Activated CD4-positive, alpha-beta T cell treated with anti-CD3 and anti-CD28 coated beads for 36 hours (primary cell): ENCODE measurements at regions of chr5 and their contacts with region 1.

Region 1: GRCh38 chr5:140690941-140691924 is at the starts of genes HARS1 and HARS2:
- DNase-seq: peak; percentile 91
- ATAC-seq: peak; percentile 95
- H3K4me3 Mint-ChIP-seq: peak within 1 kb of the TSS; percentile 97
- H3K27ac Mint-ChIP-seq: peak within 1 kb of the TSS; percentile 98
- H3K4me1 Mint-ChIP-seq: peaks cover 41% of the 10 kb centered on the region
- H3K27me3 Mint-ChIP-seq: no peaks in the 10 kb centered on the region
- total RNA-seq, gene HARS1: 83.3 to 91.0 TPM
- total RNA-seq, gene HARS2: 20.9 to 28.1 TPM

Region 2: GRCh38 chr5:140113699-140114263 is 577.5 kb before region 1 on chr5 and contains the start of gene PURA:
- CTCF ChIA-PET with region 1: no interaction called
- POLR2A ChIA-PET with region 1: no interaction called
- intact Hi-C with region 1: loop called in 1 of 2 experiments (anchors 10 kb)
- DNase-seq: peak; percentile 98
- ATAC-seq: peak; percentile 92
- H3K4me3 Mint-ChIP-seq: peak within 1 kb of the TSS; percentile 89
- H3K27ac Mint-ChIP-seq: peak within 1 kb of the TSS; percentile 84
- H3K4me1 Mint-ChIP-seq: peaks cover 65% of the 10 kb centered on the region
- H3K27me3 Mint-ChIP-seq: peaks cover 3% of the 10 kb centered on the region
- total RNA-seq, gene PURA: 9.5 to 10.7 TPM

Region 3: DNA sequence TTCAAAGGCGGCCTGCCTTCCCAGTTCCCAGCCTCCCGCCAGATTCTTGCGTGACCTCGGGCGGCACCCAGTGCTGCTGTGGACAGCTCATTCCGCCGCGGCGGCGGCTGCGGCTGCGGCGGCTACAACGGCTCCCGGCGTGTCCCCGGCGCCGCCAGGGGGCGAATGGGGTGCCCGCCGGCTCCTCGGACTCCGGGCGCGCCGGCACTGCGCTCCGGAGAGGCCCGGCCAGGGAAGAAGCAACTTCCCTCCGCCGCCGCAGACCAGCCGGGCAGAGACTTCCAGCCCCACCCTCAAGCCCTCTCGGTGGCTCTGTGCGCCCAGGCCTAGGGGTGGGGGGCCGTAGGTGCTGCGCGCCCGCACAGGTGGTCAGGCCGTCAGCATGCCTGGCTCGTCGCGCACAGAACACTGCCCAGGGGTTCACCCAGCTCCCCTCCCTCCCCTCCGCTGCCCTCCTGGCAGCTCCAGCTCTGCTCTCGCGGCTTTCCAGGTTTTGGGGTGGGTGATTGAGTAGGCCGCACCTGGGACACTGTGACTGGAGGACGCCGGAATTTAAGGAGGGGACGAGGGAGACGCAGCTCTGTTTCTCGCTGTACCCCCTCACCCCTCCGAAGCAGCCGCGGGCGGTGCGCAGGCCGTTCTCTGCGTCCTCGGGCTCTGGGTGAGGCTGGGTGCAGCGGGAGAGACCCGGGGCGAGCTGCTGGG is 545.3 kb before region 1 on chr5:
- CTCF ChIA-PET with region 1: no interaction called
- POLR2A ChIA-PET with region 1: no interaction called
- intact Hi-C with region 1: no loop called
- DNase-seq: peak; percentile 79
- ATAC-seq: peak; percentile 84
- H3K4me3 Mint-ChIP-seq: peak overlapping the region; percentile 26
- H3K27ac Mint-ChIP-seq: no peak overlapping the region
- H3K4me1 Mint-ChIP-seq: peaks cover 14% of the 10 kb centered on the region
- H3K27me3 Mint-ChIP-seq: peaks cover 12% of the 10 kb centered on the region

Region 4: GRCh38 chr5:140547508-140548299 is 143.5 kb before region 1 on chr5 and contains the start of gene EIF4EBP3:
- CTCF ChIA-PET with region 1: interaction called, 5 read pairs
- POLR2A ChIA-PET with region 1: no interaction called
- intact Hi-C with region 1: loop called in 1 of 2 experiments (anchors 1 kb)
- DNase-seq: peak; percentile 93
- ATAC-seq: peak; percentile 99
- H3K4me3 Mint-ChIP-seq: peak within 1 kb of the TSS; percentile 82
- H3K27ac Mint-ChIP-seq: peak within 1 kb of the TSS; percentile 93
- H3K4me1 Mint-ChIP-seq: peaks cover 38% of the 10 kb centered on the region
- H3K27me3 Mint-ChIP-seq: no peaks in the 10 kb centered on the region
- total RNA-seq, gene EIF4EBP3: 15.8 to 17.3 TPM

Region 5: DNA sequence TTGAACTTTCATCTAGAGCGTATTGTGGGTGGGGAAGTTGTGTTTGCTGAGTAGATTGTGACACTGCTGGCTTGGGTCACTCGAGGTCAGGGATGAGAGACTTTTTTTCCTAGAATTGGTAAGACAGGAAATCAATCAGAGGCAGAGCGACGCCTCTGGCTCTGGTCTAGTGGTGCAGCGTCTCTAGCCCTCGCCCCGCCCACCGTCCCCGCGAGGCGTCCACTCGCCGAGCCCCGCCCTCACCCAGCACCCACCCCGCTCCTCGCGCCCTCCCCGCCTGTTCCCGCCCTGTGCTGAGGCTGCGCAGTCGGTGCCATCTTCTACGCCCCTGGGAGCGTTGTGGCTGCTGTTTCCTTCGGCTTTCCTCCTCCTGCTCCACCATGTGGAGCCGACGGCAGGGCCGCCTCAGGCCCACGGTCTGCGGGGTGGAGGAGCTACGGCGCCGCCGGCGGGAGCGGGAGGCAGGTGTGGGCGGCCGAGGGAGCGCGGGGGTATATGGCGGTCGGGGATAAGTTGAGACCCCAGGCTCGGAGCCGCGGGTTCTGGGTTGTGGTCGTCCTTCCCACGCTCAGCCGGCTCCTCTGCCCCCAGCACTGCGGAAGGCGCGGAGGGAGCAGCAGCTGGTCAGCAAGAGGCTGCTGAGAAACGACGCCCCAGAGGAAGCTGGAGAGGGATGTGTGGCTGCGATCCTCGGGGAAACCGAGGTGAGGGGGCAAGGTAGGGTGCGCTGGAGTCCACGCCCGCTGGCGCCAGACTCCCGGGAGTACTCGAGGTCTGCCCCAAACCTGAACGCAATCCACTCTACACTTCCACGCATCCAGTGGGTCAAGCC is 51.9 kb before region 1 on chr5 and contains the start of gene TMCO6:
- CTCF ChIA-PET with region 1: interaction called, 3 read pairs
- POLR2A ChIA-PET with region 1: interaction called, 3 read pairs
- intact Hi-C with region 1: loop called (anchors 1 to 2 kb)
- DNase-seq: peak; percentile 99
- ATAC-seq: peak; percentile 94
- H3K4me3 Mint-ChIP-seq: peak within 1 kb of the TSS; percentile 93
- H3K27ac Mint-ChIP-seq: peak within 1 kb of the TSS; percentile 95
- H3K4me1 Mint-ChIP-seq: peaks cover 39% of the 10 kb centered on the region
- H3K27me3 Mint-ChIP-seq: no peaks in the 10 kb centered on the region
- total RNA-seq, gene TMCO6: 36.5 to 36.6 TPM

Region 6: DNA sequence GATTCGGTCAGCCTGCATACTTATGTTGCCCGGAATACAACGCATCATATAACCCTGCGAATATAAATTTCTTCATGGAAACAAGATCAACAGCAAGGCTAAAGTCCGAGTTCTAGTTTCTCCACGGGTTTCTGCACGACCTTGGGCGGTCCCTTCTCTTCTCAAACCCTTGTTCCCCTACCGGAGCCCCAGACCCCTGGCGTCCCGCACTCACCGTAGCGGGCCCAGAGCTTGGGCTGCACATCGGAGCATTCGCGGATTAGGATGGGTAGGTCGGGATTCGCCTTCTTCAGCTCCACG is 44.2 kb before region 1 on chr5:
- CTCF ChIA-PET with region 1: interaction called, 6 read pairs
- POLR2A ChIA-PET with region 1: interaction called, 9 read pairs
- intact Hi-C with region 1: loop called (anchors 1 kb)
- DNase-seq: no peak
- ATAC-seq: peak; percentile 14
- H3K4me3 Mint-ChIP-seq: peak overlapping the region; percentile 97
- H3K27ac Mint-ChIP-seq: peak overlapping the region; percentile 98
- H3K4me1 Mint-ChIP-seq: peaks cover 27% of the 10 kb centered on the region
- H3K27me3 Mint-ChIP-seq: no peaks in the 10 kb centered on the region

Region 7: DNA sequence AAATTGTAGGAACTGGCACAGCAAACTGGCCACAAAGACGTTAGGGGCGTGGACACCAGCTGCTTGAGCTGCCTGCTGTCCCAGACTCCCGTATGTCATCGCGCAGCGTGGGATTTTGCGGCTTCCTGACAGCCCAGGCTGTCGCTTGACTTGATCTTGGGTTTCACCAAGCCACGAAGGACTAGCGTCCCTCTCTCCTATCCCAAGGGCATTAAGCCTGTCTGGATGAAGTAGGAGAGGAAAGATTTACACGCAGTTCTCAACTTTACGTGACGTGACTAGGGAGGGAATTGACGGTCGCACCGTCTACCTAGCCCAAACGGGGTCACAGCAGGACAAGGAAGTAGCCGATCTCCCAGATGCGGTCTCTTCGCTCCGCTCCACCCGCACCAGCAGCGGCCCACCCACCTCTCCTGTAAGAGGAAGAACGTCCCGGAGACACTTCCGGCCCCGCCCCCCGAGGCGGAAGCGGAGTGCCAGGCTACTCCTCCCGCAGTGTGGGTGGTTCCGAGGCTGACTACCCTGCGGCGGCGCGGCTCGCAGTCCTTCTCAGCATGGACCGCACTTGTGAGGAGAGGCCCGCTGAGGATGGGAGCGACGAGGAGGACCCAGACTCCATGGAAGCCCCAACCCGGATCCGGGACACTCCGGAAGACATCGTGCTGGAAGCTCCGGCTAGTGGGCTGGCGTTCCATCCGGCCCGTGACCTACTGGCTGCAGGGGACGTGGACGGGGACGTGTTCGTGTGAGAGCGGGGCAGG is 26.7 kb before region 1 on chr5 and contains the start of gene WDR55:
- CTCF ChIA-PET with region 1: interaction called, 5 read pairs
- POLR2A ChIA-PET with region 1: interaction called, 4 read pairs
- intact Hi-C with region 1: loop called (anchors 1 kb)
- DNase-seq: peak; percentile 97
- ATAC-seq: peak; percentile 96
- H3K4me3 Mint-ChIP-seq: peak within 1 kb of the TSS; percentile 98
- H3K27ac Mint-ChIP-seq: peak within 1 kb of the TSS; percentile 96
- H3K4me1 Mint-ChIP-seq: peaks cover 28% of the 10 kb centered on the region
- H3K27me3 Mint-ChIP-seq: no peaks in the 10 kb centered on the region
- total RNA-seq, gene WDR55: 25.9 to 31.7 TPM

Region 8: DNA sequence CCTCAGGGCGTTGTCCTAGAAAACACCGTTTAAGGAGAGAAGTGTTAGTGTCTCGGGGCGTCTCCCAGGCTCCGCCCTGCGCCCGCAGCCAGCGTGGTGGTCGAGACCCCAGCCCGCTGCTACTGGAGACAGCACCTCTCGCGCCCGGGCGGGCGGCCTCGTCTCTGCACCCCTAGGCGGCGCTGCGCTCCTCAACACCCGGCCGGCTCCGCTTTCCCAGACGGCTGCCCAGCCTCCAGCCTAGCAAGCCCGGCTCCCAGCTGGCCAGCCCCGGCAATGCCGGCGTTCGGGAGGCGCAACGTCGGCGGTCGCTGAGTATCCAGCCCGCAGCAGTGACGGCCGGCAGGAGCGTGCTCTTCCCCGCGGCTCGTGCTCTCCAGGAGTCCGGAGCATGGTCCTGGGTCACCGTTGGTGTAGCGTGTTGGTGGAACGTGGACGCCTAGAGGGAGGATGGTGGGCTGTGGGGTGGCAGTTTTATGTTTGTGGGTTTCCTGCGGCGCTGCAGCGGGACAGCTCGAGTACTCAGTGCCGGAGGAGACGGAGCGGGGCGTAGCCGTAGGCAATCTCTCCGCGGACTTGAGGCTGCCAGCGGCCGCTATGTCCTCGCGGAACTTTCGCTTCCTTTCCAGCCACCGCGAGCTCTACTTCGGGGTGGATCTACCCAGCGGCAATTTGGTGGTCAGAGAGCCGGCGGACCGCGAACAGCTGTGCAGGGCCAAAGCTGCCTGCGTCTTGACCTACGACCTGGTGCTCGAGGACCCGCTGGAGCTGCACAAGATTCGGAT is 235.4 kb after region 1 on chr5:
- CTCF ChIA-PET with region 1: no interaction called
- POLR2A ChIA-PET with region 1: no interaction called
- intact Hi-C with region 1: no loop called
- DNase-seq: peak; percentile 70
- ATAC-seq: peak; percentile 55
- H3K4me3 Mint-ChIP-seq: peak overlapping the region; percentile 40
- H3K27ac Mint-ChIP-seq: no peak overlapping the region
- H3K4me1 Mint-ChIP-seq: peaks cover 7% of the 10 kb centered on the region
- H3K27me3 Mint-ChIP-seq: peaks cover 51% of the 10 kb centered on the region

Region 9: GRCh38 chr5:141135030-141135717 is 443.9 kb after region 1 on chr5 and contains the start of gene PCDHB5:
- CTCF ChIA-PET with region 1: no interaction called
- POLR2A ChIA-PET with region 1: no interaction called
- intact Hi-C with region 1: no loop called
- DNase-seq: peak; percentile 38
- ATAC-seq: no peak
- H3K4me3 Mint-ChIP-seq: peak within 1 kb of the TSS; percentile 11
- H3K27ac Mint-ChIP-seq: no peak within 1 kb of the TSS
- H3K4me1 Mint-ChIP-seq: peaks cover 9% of the 10 kb centered on the region
- H3K27me3 Mint-ChIP-seq: peaks cover 32% of the 10 kb centered on the region
- total RNA-seq, gene PCDHB5: not detected